IMR-90 (cell line): ENCODE measurements at regions of chr15 and their contacts with region 1.

Region 1: GRCh38 chr15:44125879-44126278 is 69.2 kb downstream of the FRMD5 start:
- DNase-seq: no peak
- ATAC-seq: no peak
- H3K4me3 ChIP-seq: no peak overlapping the region
- H3K27ac ChIP-seq: no peak overlapping the region
- H3K4me1 ChIP-seq: no peaks in the 10 kb centered on the region
- H3K27me3 ChIP-seq: no peaks in the 10 kb centered on the region
- CTCF ChIP-seq: no peak
- POLR2A ChIP-seq: no peak
- RAD21 ChIP-seq: no peak

Region 2: GRCh38 chr15:43948691-43949325 is 177.1 kb before region 1 on chr15:
- CTCF ChIA-PET with region 1: interaction called, 11 read pairs
- POLR2A ChIA-PET with region 1: no interaction called
- dilution Hi-C with region 1: no loop called
- in situ Hi-C with region 1: no loop called
- intact Hi-C with region 1: no loop called
- DNase-seq: peak; percentile 28
- ATAC-seq: no peak
- H3K4me3 ChIP-seq: no peak overlapping the region
- H3K27ac ChIP-seq: no peak overlapping the region
- H3K4me1 ChIP-seq: peaks cover under 1% of the 10 kb centered on the region; the same call in 1 of the 2 replicates
- H3K27me3 ChIP-seq: no peaks in the 10 kb centered on the region
- CTCF ChIP-seq: no peak
- POLR2A ChIP-seq: no peak
- RAD21 ChIP-seq: no peak

Region 3: DNA sequence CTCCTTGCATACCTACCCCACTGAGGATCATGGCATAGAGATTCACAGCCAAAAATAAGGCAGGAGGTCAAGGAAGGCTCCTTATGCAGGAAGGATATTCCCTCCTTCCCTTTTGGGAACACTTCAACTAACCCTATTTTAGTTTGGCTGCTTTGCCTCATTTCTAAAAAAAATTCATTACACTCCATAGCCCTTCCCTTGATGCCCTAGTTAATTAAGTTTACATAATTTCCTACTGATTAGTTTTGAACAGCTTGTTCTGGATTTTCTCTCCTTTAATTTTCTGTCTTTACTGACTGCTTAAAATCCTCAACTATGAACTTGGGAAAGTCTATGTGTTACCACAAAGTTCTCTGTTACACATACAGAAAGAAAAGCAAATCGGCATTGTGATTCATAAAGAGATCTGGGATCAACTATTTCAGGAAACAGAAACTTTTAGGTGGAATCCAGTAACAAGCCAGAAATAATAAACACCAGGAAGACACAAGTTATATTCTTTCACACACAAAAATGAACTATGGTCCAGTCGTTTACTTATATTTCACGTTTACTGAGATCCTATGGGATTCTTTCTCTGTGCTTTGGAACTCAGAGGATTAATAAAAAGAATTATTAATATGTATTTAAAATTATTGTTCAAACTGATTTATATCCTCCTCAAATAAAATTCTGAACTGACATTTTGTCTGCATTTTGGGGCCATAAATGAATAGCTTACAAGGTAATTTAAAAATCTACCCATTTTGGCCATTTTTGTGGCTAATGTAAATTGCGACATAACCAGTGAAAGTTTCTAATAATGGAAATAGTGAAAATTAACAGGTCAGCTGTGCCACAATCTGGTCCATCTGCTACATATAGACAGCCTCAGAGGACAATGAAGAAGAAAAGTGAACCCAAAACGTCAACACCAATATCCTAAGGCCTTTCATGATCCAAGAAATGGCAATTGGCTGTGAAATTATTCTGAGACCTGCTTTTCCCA is 44.6 kb before region 1 on chr15:
- CTCF ChIA-PET with region 1: no interaction called
- POLR2A ChIA-PET with region 1: no interaction called
- dilution Hi-C with region 1: no loop called
- in situ Hi-C with region 1: no loop called
- intact Hi-C with region 1: no loop called
- DNase-seq: peak; percentile 92
- ATAC-seq: peak; percentile 92
- H3K4me3 ChIP-seq: no peak overlapping the region
- H3K27ac ChIP-seq: peak overlapping the region; percentile 81
- H3K4me1 ChIP-seq: peaks cover 5% of the 10 kb centered on the region; the same call in 1 of the 2 replicates
- H3K27me3 ChIP-seq: no peaks in the 10 kb centered on the region
- CTCF ChIP-seq: no peak
- POLR2A ChIP-seq: no peak
- RAD21 ChIP-seq: no peak

Region 4: DNA sequence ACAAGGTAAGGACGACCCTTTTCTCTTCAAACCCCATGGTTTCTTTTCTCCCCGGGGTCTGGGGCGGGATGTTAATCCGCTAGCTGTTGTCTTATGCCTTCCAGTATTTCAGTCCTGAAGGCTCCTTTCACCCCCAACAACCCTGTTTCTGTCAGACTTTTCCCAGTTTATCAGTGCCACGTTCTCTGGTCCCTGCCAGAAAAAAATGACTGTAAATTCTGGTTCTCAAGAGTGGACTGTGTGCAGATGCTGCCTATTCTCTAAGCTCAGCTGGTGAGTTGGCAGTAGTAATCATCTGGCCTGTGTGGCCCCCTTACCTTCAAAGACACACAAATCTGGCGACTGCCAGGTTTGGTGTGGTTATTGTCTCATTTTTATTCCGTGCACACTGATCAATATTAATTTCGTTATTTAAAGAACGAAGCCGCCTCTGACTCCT is 163.5 kb after region 1 on chr15:
- CTCF ChIA-PET with region 1: no interaction called
- POLR2A ChIA-PET with region 1: no interaction called
- dilution Hi-C with region 1: no loop called
- in situ Hi-C with region 1: no loop called
- intact Hi-C with region 1: no loop called
- DNase-seq: no peak
- ATAC-seq: no peak
- H3K4me3 ChIP-seq: peak overlapping the region; percentile 63
- H3K27ac ChIP-seq: peak overlapping the region; percentile 65
- H3K4me1 ChIP-seq: peaks cover 4% of the 10 kb centered on the region; the same call in 1 of the 2 replicates
- H3K27me3 ChIP-seq: no peaks in the 10 kb centered on the region
- CTCF ChIP-seq: no peak
- POLR2A ChIP-seq: no peak
- RAD21 ChIP-seq: no peak